GM13976 (cell line): ENCODE measurements at regions of chr18 and their contacts with region 1.

Region 1: GRCh38 chr18:72544092-72544886 is at the start of gene CBLN2:
- DNase-seq: peak; percentile 86
- CTCF ChIP-seq: peak; percentile 86

Region 2: DNA sequence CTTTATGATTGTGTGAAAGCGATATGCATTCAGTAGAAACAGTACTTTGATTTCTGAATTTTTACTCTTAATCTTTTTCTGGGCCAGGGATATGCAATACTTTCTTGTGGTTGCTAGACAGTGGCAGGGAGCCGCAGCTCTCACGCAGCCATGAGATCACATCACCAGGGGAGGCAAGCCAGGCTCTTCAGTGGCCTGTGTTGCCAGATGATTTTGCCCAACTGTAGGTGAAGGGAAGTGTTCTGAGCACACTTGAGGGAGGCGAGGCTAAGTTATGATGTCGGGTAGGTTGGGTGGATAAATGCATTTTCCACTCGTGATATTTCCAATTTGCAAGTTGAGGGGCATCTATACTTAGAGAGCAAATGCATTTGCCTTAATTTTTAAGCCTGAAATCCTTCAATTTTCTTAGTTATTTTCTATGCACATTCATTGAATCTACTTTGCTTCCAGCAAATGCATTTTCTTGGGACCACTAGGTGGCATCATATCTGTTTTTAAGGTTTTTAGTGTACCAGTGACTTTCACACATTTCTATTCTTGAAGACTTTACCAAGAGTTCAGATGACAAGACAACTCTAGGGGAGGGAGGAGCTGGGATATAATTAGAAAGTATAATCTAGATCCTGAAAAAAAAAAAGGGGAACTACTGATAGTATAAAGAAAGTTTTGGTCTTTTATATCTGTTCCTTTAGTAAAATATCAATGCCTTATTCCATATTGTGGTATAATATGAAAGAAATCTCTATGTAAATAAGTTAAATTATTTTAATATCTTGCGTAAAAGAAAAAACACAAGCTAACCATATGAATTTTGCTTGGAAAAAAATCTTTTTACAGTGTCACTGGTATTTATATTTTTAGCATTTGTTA is 1612.1 kb before region 1 on chr18:
- in situ Hi-C with region 1: loop called (anchors 25 kb)
- DNase-seq: peak; percentile 10
- CTCF ChIP-seq: peak; percentile 33

Region 3: GRCh38 chr18:72342933-72343332 is 201.4 kb before region 1 on chr18:
- in situ Hi-C with region 1: no loop called
- DNase-seq: no peak
- CTCF ChIP-seq: no peak

Region 4: GRCh38 chr18:72652990-72653593 is 108.8 kb after region 1 on chr18:
- in situ Hi-C with region 1: no loop called
- DNase-seq: peak; percentile 51
- CTCF ChIP-seq: peak; percentile 60